PC-3 (cell line): ENCODE measurements at regions of chr13 and their contacts with region 1.

Region 1: DNA sequence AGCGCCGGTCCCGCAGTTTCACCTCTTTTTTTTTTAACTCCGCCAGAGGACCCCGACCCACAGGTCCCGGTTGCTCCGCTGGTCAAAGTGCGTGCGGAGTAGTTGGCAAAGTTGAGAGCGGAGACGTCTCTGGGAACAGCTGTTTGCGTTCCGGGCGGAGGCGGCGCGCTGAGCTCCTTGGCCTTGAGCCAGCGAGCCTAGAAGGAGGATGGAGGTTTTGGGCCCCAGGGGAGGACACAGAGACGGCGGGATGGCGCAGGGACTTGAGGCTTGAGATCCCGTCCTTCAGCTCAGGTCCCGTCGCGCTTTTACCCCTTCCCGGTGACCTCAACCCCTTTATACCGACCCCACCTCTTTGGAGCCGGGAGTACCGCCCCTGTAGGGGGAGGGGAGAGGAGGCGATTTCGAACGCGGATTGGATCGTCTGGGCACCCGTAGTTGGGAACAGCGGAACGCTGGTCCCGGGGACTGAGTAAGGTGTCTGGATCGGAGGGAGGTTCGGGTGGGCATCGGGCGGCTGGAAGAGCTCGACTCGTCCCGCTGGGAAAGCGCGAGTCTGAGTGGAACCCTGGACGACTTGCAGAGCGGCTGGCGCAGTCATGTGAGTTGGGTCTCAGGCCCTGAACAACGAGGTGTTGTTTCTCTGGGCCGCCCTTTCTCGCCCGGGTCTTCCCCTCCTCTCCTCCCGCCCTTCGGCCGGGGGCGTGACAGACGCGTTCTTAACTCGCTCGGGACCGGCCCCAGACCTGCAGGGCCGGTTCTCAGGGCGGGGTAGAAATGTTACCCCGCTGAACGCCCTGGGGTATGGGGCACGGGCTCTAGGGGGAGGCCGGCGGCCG is at the start of gene WBP4:
- DNase-seq: peak; percentile 88
- ATAC-seq: peak; percentile 68
- H3K4me3 ChIP-seq: peak within 1 kb of the TSS; percentile 82
- H3K27ac ChIP-seq: peak within 1 kb of the TSS; percentile 90
- H3K4me1 ChIP-seq: peaks cover 40% of the 10 kb centered on the region
- H3K27me3 ChIP-seq: no peaks in the 10 kb centered on the region
- CTCF ChIP-seq: no peak
- total RNA-seq, gene WBP4: 6.4 and 7.3 TPM in 2 replicates

Region 2: DNA sequence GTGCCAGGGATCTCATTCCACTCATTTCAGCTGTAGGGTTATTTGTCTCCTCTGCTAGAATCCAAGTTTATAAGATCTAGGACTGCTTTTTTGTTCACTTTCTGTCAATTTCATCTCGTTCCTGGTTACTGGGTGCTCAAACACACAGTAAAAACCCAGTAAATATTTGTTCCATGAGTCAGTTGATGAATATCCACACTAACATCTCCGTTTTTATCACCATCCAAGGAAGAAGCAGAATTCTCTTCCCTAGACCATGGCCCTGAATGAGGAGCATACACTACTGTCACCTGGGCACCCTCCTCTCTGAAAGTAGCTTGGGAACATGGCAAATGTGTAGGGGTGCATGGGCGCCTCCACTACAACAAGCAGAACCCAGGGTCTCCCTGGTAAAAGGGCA is 785.7 kb before region 1 on chr13:
- CTCF ChIA-PET with region 1: no interaction called
- POLR2A ChIA-PET with region 1: no interaction called
- intact Hi-C with region 1: no loop called
- DNase-seq: peak; percentile 75
- ATAC-seq: peak; percentile 68
- H3K4me3 ChIP-seq: no peak overlapping the region
- H3K27ac ChIP-seq: peak overlapping the region; percentile 60
- H3K4me1 ChIP-seq: peaks cover 45% of the 10 kb centered on the region
- H3K27me3 ChIP-seq: no peaks in the 10 kb centered on the region
- CTCF ChIP-seq: no peak

Region 3: GRCh38 chr13:40922437-40923040 is 138.8 kb before region 1 on chr13:
- CTCF ChIA-PET with region 1: no interaction called
- POLR2A ChIA-PET with region 1: no interaction called
- intact Hi-C with region 1: loop called (anchors 2 kb)
- DNase-seq: no peak
- ATAC-seq: no peak
- H3K4me3 ChIP-seq: no peak overlapping the region
- H3K27ac ChIP-seq: no peak overlapping the region
- H3K4me1 ChIP-seq: peaks cover 7% of the 10 kb centered on the region
- H3K27me3 ChIP-seq: no peaks in the 10 kb centered on the region
- CTCF ChIP-seq: no peak

Region 4: GRCh38 chr13:41145146-41145908 is 84.0 kb after region 1 on chr13:
- CTCF ChIA-PET with region 1: no interaction called
- POLR2A ChIA-PET with region 1: no interaction called
- intact Hi-C with region 1: no loop called
- DNase-seq: no peak
- ATAC-seq: no peak
- H3K4me3 ChIP-seq: no peak overlapping the region
- H3K27ac ChIP-seq: no peak overlapping the region
- H3K4me1 ChIP-seq: no peaks in the 10 kb centered on the region
- H3K27me3 ChIP-seq: no peaks in the 10 kb centered on the region
- CTCF ChIP-seq: no peak

Region 5: DNA sequence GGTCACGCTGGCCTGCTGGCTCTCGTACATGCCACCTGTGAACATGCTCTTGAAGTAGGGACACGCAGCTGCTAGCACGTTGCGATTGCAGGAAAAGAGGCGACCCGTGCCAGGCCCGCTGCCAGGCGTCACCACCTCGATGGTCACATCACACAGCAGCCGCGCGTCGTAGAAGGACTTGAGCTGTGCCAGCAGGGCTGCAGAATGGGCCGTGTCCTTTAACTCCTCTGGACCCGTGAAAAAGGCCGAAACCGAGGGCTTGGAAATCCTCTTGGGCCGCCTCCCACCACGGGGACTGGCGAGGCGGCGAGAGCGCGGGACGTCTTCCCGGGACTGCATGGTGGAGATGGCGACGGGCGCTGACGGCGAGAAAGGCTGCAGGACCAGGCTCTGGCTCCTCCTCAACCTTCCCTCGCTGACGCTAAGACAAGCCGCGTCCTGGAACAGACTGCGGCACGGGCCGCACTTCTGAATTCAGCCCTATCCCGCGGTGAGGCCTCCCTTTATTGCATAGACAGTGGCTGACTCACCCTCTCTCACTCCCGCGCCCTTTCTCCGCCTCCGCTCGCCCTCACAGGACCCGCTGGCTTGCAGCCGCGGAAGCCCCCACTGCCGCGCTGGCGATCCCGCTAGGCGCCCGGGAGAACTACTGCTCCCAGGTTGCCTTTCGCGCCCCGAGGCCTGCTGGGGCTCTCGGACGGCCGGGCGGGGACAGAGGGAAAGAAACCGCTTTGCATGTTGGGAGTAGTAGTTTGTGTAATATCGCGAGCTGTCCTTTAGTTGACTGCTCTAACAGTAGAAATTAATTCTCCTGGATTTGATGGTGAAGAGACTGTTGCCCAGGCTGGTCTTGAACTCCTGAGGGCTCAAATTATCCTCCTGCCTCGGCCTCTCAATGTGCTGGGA is 132.9 kb after region 1 on chr13 and contains the start of gene KBTBD7:
- CTCF ChIA-PET with region 1: no interaction called
- POLR2A ChIA-PET with region 1: no interaction called
- intact Hi-C with region 1: loop called (anchors 5 kb)
- DNase-seq: peak; percentile 89
- ATAC-seq: peak; percentile 96
- H3K4me3 ChIP-seq: peak within 1 kb of the TSS; percentile 59
- H3K27ac ChIP-seq: peak within 1 kb of the TSS; percentile 58
- H3K4me1 ChIP-seq: peaks cover 18% of the 10 kb centered on the region
- H3K27me3 ChIP-seq: no peaks in the 10 kb centered on the region
- CTCF ChIP-seq: no peak
- total RNA-seq, gene KBTBD7: 1.0 and 1.6 TPM in 2 replicates

Region 6: DNA sequence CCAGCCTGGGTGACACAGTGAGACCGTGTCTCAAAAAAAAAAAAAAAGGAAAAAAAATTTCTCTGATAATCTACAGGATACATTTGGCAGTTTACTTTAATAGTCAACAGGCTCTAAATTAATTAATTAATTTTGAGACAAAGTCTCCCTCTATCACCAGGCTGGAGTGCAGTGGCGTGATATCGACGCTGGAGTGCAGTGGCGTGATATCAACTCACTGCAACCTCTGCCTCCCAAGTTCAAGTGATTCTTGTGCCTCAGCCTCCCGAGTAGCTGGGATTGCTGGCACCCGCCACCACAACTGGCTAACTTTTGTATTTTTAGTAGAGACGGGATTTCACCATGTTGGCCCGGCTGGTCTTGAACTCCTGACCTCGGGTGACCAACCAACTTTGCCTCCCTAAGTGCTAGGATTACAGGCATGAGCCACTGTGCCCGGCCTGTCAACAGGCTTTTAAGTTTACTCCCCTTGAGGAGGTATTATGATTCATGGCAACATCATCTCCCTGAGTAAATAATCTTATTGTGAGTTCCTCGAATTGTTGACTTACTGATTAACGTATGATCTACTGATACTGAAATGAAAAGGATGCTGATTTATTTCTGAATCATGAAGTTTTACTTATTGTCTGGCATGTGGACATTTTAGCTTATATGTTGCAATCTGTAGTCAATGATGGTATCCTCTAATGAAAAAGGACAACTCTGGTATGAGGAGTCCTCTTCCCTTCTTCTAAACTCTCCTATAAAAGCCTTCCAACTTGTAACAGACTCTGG is 223.4 kb after region 1 on chr13:
- CTCF ChIA-PET with region 1: no interaction called
- POLR2A ChIA-PET with region 1: no interaction called
- intact Hi-C with region 1: loop called (anchors 1 kb)
- DNase-seq: peak; percentile 95
- ATAC-seq: peak; percentile 97
- H3K4me3 ChIP-seq: no peak overlapping the region
- H3K27ac ChIP-seq: peak overlapping the region; percentile 96
- H3K4me1 ChIP-seq: peaks cover 12% of the 10 kb centered on the region
- H3K27me3 ChIP-seq: no peaks in the 10 kb centered on the region
- CTCF ChIP-seq: no peak